ENCODE measurements at regions of chr14 and their contacts with region 1.

Region 1: DNA sequence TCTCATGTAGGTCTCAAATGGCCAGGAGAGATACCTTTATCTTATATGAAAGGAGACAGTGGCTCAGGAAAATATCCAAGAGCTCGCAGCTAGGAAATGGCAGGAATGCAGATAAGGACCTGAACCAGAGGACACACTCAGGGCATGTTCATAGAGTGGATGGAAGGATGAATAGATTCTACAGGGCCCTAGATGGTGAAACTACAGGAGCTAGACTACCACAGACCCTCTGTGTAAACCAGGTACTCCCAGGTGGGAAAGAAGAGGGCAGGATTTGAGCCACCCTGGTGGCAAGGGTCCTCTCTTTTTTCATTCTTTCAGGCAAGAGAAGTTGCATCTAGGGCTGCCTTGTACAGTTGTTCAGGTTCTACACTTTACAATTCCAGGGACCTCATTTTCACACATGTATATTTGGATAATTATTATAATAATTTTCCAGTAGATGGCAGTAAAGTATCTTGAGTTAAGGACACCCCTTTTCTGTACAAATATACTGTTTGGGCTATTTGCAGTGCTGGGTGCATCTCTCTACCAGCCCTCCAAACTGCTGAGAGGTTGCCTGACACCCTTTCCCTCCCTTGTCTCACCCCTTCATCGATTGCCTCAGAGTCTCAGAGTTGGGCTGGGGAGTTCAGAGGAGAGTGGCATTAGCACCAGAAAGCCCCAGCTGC is 10.5 kb upstream of the ZDHHC22 start:
- DNase-seq: no peak
- H3K4me3 ChIP-seq: no peak overlapping the region
- H3K27ac ChIP-seq: no peak overlapping the region
- H3K4me1 ChIP-seq: no peaks in the 10 kb centered on the region
- H3K27me3 ChIP-seq: peaks cover 3% of the 10 kb centered on the region
- CTCF ChIP-seq: peak in 5 of 6 experiments; percentile 33 to 52 (median 42)
- POLR2A ChIP-seq: no peak

Region 2: GRCh38 chr14:77212943-77213678 is 61.1 kb after region 1 on chr14:
- intact Hi-C with region 1: loop called in 1 of 2 experiments (anchors 5 kb)
- DNase-seq: peak; percentile 31 to 79 (median 52)
- H3K4me3 ChIP-seq: no peak overlapping the region
- H3K27ac ChIP-seq: no peak overlapping the region
- H3K4me1 ChIP-seq: no peaks in the 10 kb centered on the region
- H3K27me3 ChIP-seq: no peaks in the 10 kb centered on the region
- CTCF ChIP-seq: peak; percentile 36 to 65 (median 63)
- POLR2A ChIP-seq: no peak

Region 3: DNA sequence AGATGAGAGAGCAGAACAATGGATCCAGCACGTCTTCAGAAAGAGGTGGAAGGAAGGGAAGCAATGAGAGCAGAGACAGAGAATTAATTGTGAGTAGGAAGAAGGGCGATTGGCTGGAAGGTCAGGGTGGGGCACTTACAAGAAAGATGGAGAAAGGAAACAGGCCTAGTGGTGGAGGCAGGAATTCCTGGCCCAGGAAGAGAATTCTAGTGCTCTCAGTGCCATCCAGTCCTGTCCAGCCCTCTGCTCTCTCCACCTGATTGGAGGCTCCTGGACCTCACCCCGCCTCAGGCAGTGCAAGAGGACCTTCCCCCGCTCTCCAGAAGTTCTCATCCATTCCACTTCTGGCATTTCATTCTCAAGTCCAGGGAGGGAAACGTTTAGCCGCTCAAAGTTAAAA is 76.0 kb after region 1 on chr14:
- intact Hi-C with region 1: no loop called
- DNase-seq: no peak
- H3K4me3 ChIP-seq: no peak overlapping the region
- H3K27ac ChIP-seq: no peak overlapping the region
- H3K4me1 ChIP-seq: no peaks in the 10 kb centered on the region
- H3K27me3 ChIP-seq: no peaks in the 10 kb centered on the region
- CTCF ChIP-seq: no peak
- POLR2A ChIP-seq: no peak

Region 4: GRCh38 chr14:77314043-77314442 is 162.0 kb after region 1 on chr14:
- intact Hi-C with region 1: loop called (anchors 5 to 10 kb)
- DNase-seq: peak in 5 of 7 donors; percentile 46 to 71 (median 65)
- H3K4me3 ChIP-seq: no peak overlapping the region
- H3K27ac ChIP-seq: peak overlapping the region in 4 of 5 donors; percentile 9 to 74 (median 57)
- H3K4me1 ChIP-seq: peaks cover 14 to 47% of the 10 kb centered on the region in 2 donors
- H3K27me3 ChIP-seq: no peaks in the 10 kb centered on the region
- CTCF ChIP-seq: no peak
- POLR2A ChIP-seq: peak in 1 of 2 donors; percentile 42

Region 5: GRCh38 chr14:77707724-77708408 is 555.8 kb after region 1 on chr14 and contains the starts of genes ALKBH1 and SLIRP:
- intact Hi-C with region 1: no loop called
- DNase-seq: peak; percentile 81 to 94 (median 89)
- H3K4me3 ChIP-seq: peak within 1 kb of the TSS; percentile 73 to 98 (median 89)
- H3K27ac ChIP-seq: peak within 1 kb of the TSS in 3 of 5 donors; percentile 41 to 64 (median 62)
- H3K4me1 ChIP-seq: peaks cover 9 to 31% of the 10 kb centered on the region in 2 donors
- H3K27me3 ChIP-seq: no peaks in the 10 kb centered on the region
- CTCF ChIP-seq: no peak
- POLR2A ChIP-seq: peak in 1 of 2 donors; percentile 60
- total RNA-seq, gene ALKBH1: 6.7 to 18.0 (median 12.1) TPM
- total RNA-seq, gene SLIRP: 70.6 to 744 (median 108) TPM